Aorta (tissue), 5 donors: ENCODE measurements at regions of chr1 and their contacts with region 1.

Region 1: DNA sequence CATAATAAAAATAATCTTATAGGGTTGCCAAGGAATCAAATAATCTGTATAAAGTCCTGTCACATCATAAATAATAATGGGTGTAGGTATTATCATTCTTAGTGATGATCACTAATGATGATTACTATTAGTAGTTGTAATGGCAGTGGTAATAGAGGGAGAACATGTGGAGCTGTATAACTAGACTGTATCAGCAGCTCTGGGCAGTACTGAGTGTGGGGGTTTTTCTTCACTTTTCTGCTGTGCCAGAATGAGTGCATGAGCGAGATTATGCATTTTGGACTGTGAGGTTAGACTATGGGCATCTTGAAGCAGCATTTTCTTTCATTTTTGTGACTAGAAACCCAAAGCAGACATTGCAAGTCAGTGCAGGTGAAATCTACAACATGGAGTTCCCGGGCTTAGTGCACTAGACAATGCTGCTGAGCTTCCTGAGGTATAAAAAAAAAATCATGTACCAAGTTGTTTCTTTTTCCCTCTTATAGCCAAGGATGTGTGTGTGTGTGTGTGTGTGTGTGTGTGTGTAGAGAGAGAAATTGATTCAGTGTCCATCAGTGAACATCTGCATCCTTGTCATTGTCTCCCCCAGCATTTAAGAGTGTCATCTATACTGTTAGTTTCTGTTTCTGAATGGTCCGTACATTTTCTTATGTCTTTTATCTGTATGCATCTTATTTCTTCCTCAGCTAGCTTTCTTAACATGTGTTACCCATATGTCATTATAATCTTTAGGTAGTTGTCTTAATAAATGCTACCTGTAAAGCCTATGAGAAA is 86.6 kb downstream of the GIPC2 start:
- DNase-seq: no peak
- ATAC-seq: no peak
- H3K4me3 ChIP-seq: no peak overlapping the region
- H3K27ac ChIP-seq: no peak overlapping the region
- H3K4me1 ChIP-seq: no peaks in the 10 kb centered on the region
- H3K27me3 ChIP-seq: no peaks in the 10 kb centered on the region

Region 2: GRCh38 chr1:78114034-78114956 is 18.1 kb before region 1 on chr1:
- intact Hi-C with region 1: no loop called
- DNase-seq: no peak
- ATAC-seq: peak; percentile 84
- H3K4me3 ChIP-seq: no peak overlapping the region
- H3K27ac ChIP-seq: no peak overlapping the region
- H3K4me1 ChIP-seq: peaks cover 0 to 2% of the 10 kb centered on the region in 2 donors
- H3K27me3 ChIP-seq: no peaks in the 10 kb centered on the region

Region 3: GRCh38 chr1:78607334-78607927 is 475.1 kb after region 1 on chr1:
- intact Hi-C with region 1: loop called in 1 of 2 experiments (anchors 5 kb)
- DNase-seq: no peak
- ATAC-seq: no peak
- H3K4me3 ChIP-seq: no peak overlapping the region
- H3K27ac ChIP-seq: no peak overlapping the region
- H3K4me1 ChIP-seq: no peaks in the 10 kb centered on the region
- H3K27me3 ChIP-seq: no peaks in the 10 kb centered on the region